BJ (cell line): ENCODE measurements at regions of chr6 and their contacts with region 1.

Region 1: GRCh38 chr6:32933636-32934085 is 7.2 kb downstream of the HLA-DMB start:
- DNase-seq: no peak
- H3K4me3 ChIP-seq: no peak overlapping the region
- H3K27me3 ChIP-seq: peaks cover 30% of the 10 kb centered on the region
- CTCF ChIP-seq: peak; percentile 82

Region 2: DNA sequence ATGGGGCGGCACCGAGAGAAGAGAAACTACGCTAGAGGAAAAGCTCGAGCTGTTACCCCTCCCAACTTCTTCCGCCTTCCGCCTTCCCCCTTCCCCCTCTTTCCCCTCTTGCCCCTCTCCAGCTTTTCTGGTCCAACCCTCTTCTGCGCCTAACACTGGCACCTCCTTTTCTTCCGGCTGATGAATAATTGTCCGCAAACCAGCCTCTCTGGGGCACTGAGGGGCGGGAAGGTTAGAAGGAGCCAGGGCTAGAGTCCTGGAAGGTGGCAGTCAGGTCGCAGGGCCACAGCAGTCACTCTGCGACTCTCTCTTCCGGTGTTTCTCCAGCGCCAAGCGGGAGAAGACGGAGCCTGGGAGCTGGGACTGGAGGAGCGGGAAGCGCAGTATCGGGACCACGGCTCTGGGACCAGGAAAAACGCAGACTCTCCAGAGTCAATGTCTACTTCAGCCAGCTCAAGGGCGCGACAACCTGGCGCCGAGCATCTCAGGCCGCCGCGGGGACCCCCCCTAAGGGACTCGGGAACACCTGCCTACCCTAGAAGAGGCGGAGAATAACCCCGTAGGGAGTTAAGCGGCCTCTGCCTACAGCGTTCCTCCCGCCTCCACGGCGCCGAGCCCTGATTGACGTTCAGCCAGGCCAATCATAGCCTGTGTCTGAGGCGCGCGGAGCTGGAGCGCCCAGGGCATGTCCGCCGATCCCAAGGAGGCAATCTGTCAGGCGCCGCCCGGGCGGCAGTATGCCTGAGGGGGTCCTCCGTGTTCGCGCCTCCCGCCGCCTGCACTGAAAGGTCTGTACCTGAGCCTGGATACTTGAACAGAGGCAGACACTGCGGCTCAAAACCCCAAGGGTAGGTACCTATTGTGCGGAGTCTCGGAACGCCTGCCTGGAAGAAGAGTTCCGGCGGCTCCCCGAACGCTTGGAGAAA is 39.3 kb before region 1 on chr6:
- CTCF ChIA-PET with region 1: interaction called, 13 read pairs
- POLR2A ChIA-PET with region 1: no interaction called
- DNase-seq: peak; percentile 61
- H3K4me3 ChIP-seq: peak overlapping the region; percentile 82
- H3K27me3 ChIP-seq: no peaks in the 10 kb centered on the region
- CTCF ChIP-seq: no peak

Region 3: GRCh38 chr6:32920715-32921114 is 12.9 kb before region 1 on chr6:
- CTCF ChIA-PET with region 1: interaction called, 10 read pairs
- POLR2A ChIA-PET with region 1: no interaction called
- DNase-seq: no peak
- H3K4me3 ChIP-seq: no peak overlapping the region
- H3K27me3 ChIP-seq: peaks cover 6% of the 10 kb centered on the region
- CTCF ChIP-seq: no peak

Region 4: GRCh38 chr6:32952817-32953739 is 19.4 kb after region 1 on chr6 and contains the start of gene HLA-DMA:
- CTCF ChIA-PET with region 1: interaction called, 66 read pairs
- POLR2A ChIA-PET with region 1: no interaction called
- DNase-seq: peak; percentile 95
- H3K4me3 ChIP-seq: no peak within 1 kb of the TSS
- H3K27me3 ChIP-seq: no peaks in the 10 kb centered on the region
- CTCF ChIP-seq: peak; percentile 88
- polyA plus RNA-seq, gene HLA-DMA: 3.5 and 3.8 TPM in 2 replicates

Region 5: DNA sequence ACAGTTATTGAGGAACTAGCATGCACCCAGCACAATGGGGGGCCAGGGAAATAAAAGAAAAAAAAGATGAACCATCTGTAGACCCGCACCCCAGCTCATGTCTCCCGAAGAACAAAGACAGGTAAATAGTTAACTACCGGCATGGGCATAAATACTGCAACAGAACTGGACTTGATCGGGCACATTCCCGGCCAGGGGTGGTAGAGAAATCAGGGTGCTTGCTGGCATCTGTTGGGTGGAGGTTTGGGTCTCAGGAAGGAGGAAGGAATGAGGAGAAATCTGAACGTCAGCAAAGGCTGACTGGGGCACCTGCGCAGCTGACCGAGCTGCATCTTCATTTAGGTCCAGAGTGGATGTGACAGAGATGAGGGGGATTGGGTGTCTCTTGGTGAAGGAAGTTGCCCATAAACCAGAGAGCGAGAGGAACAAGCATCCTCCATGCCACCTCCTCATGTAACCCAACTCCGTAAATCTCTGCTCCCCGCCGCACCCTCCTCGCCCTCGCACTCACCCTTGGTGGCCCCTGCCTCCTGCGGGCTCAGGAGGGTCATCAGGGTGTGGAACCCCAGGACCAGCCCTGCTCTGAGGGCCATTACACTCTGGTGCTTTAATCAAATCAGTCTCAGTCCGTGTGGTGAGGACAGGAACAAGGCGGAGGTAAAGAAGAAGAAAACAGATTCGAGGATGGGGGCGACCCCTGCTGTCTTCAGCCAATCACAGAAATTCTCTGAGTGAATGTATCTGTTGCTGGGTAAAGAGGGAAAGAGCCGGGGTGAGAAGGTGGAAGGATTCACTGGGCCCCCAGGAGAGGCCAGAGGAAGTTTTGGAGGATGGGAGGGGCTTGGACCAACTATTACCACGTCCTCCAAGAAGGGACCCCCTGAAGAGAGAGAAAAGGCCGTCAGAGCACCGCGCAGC is 75.5 kb after region 1 on chr6 and contains the start of gene HLA-DOA:
- CTCF ChIA-PET with region 1: no interaction called
- POLR2A ChIA-PET with region 1: no interaction called
- DNase-seq: no peak
- H3K4me3 ChIP-seq: no peak within 1 kb of the TSS
- H3K27me3 ChIP-seq: peaks cover 19% of the 10 kb centered on the region
- CTCF ChIP-seq: no peak
- polyA plus RNA-seq, gene HLA-DOA: not detected in 2 replicates